Esophagus muscularis mucosa (tissue), 4 donors: ENCODE measurements at regions of chr7 and their contacts with region 1.

Region 1: GRCh38 chr7:73683056-73683964 is at the starts of genes BUD23 and DNAJC30:
- DNase-seq: peak; percentile 100
- H3K4me3 ChIP-seq: peak within 1 kb of the TSS; percentile 71 to 97 (median 80)
- H3K27ac ChIP-seq: peak within 1 kb of the TSS; percentile 79 to 87 (median 85)
- H3K4me1 ChIP-seq: peaks cover 31 to 61% (median 50%) of the 10 kb centered on the region in 4 donors
- H3K27me3 ChIP-seq: no peaks in the 10 kb centered on the region
- CTCF ChIP-seq: no peak
- EP300 ChIP-seq: no peak
- POLR2A ChIP-seq: peak; percentile 18
- total RNA-seq, gene BUD23: 43.2 to 51.5 (median 48.6) TPM
- total RNA-seq, gene DNAJC30: 4.5 to 7.5 (median 5.5) TPM

Region 2: GRCh38 chr7:73638911-73639310 is 44.4 kb before region 1 on chr7:
- intact Hi-C with region 1: no loop called
- DNase-seq: no peak
- H3K4me3 ChIP-seq: no peak overlapping the region
- H3K27ac ChIP-seq: no peak overlapping the region
- H3K4me1 ChIP-seq: peaks cover 0 to 9% (median 7%) of the 10 kb centered on the region in 4 donors
- H3K27me3 ChIP-seq: peaks cover 0 to 33% (median under 1%) of the 10 kb centered on the region in 4 donors
- CTCF ChIP-seq: no peak
- EP300 ChIP-seq: no peak
- POLR2A ChIP-seq: no peak

Region 3: DNA sequence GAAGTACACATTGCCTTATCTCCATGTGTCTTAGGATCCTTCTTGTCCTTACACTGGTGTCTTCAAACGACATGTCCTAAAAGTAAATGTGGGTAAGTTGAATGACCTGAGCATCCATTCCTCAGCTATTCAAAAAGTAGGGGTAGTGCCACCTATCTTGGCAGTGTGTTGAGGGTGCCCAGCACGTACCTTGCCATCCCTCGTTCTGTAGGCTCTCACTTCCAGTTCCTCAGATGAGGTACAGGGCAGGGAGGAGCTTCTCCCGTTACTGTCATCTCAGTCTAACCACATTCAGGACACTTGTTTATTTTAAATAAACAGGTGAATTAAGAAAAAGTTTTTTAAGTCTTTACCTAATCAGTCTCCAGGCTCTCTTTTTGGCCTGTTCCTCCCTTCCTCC is 13.1 kb after region 1 on chr7:
- intact Hi-C with region 1: loop called (anchors 2 kb)
- DNase-seq: no peak
- H3K4me3 ChIP-seq: no peak overlapping the region
- H3K27ac ChIP-seq: no peak overlapping the region
- H3K4me1 ChIP-seq: no peaks in the 10 kb centered on the region
- H3K27me3 ChIP-seq: no peaks in the 10 kb centered on the region
- CTCF ChIP-seq: no peak
- EP300 ChIP-seq: no peak
- POLR2A ChIP-seq: no peak

Region 4: GRCh38 chr7:73718905-73719805 is 35.8 kb after region 1 on chr7 and contains the start of gene STX1A:
- intact Hi-C with region 1: loop called (anchors 5 kb)
- DNase-seq: no peak
- H3K4me3 ChIP-seq: peak within 1 kb of the TSS; percentile 76 to 90 (median 87)
- H3K27ac ChIP-seq: peak within 1 kb of the TSS; percentile 72 to 85 (median 76)
- H3K4me1 ChIP-seq: peaks cover 32 to 65% (median 58%) of the 10 kb centered on the region in 4 donors
- H3K27me3 ChIP-seq: no peaks in the 10 kb centered on the region
- CTCF ChIP-seq: no peak
- EP300 ChIP-seq: no peak
- POLR2A ChIP-seq: no peak
- total RNA-seq, gene STX1A: 7.1 to 16.0 (median 9.6) TPM